ENCODE measurements at regions of chr13 and their contacts with region 1.

Region 1: GRCh38 chr13:31538067-31539042 is 201.0 kb upstream of the RXFP2 start:
- DNase-seq: peak in 2 of 3 donors; percentile 18 to 41
- ATAC-seq: peak; percentile 76
- H3K4me3 ChIP-seq: no peak overlapping the region
- H3K4me1 ChIP-seq: no peaks in the 10 kb centered on the region
- CTCF ChIP-seq: no peak

Region 2: GRCh38 chr13:31361673-31362072 is 176.7 kb before region 1 on chr13:
- intact Hi-C with region 1: no loop called
- DNase-seq: no peak
- ATAC-seq: no peak
- H3K4me3 ChIP-seq: no peak overlapping the region
- H3K4me1 ChIP-seq: no peaks in the 10 kb centered on the region
- CTCF ChIP-seq: no peak

Region 3: GRCh38 chr13:31733066-31733465 is 194.7 kb after region 1 on chr13:
- intact Hi-C with region 1: loop called in 1 of 2 experiments (anchors 10 kb)
- DNase-seq: no peak
- ATAC-seq: no peak
- H3K4me3 ChIP-seq: no peak overlapping the region
- H3K4me1 ChIP-seq: no peaks in the 10 kb centered on the region
- CTCF ChIP-seq: no peak

Measured in mucosa of descending colon (tissue), 3 donors.